ENCODE measurements at regions of chr20 and their contacts with region 1.

Region 1: DNA sequence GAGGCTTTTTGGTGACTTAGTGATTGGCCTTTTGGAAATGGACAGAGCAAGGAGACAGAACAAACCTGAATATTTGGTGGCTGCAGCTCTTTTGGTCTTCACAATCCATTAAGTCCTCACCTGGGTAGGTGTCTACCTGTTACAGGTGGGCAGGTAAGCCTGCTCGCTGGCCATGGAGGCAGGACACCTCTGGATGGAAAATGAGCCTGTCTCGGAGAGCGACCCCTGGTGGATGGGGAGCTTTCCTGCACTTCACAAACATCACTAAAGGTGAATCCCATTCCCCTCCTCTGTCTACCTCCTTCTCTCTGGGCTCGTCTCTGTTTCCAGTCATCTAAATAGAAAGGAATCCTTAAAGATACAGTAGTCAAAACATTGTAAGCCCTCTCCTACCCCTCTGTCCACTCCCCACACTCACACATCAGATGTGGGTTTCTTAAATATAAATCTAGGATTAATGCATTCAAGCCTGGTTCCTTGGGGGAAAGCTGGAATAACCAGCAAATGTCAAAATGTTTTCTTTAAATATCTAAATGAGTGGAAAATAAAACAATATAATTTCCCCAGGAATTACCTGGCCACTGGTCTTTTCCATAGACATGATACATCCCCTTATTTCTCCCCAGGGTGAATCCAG is 304.9 kb downstream of the CDH26 start:
- DNase-seq: peak; percentile 27
- H3K4me3 ChIP-seq: no peak overlapping the region
- H3K27ac ChIP-seq: no peak overlapping the region
- H3K4me1 ChIP-seq: no peaks in the 10 kb centered on the region
- H3K27me3 ChIP-seq: no peaks in the 10 kb centered on the region
- CTCF ChIP-seq: peak; percentile 58

Region 2: GRCh38 chr20:59866338-59866737 is 396.7 kb before region 1 on chr20:
- intact Hi-C with region 1: no loop called
- DNase-seq: no peak
- H3K4me3 ChIP-seq: no peak overlapping the region
- H3K27ac ChIP-seq: no peak overlapping the region
- H3K4me1 ChIP-seq: no peaks in the 10 kb centered on the region
- H3K27me3 ChIP-seq: no peaks in the 10 kb centered on the region
- CTCF ChIP-seq: no peak

Region 3: GRCh38 chr20:60057123-60057801 is 205.8 kb before region 1 on chr20:
- intact Hi-C with region 1: loop called (anchors 5 kb)
- DNase-seq: peak; percentile 52
- H3K4me3 ChIP-seq: no peak overlapping the region
- H3K27ac ChIP-seq: no peak overlapping the region
- H3K4me1 ChIP-seq: no peaks in the 10 kb centered on the region
- H3K27me3 ChIP-seq: no peaks in the 10 kb centered on the region
- CTCF ChIP-seq: peak; percentile 83

Region 4: DNA sequence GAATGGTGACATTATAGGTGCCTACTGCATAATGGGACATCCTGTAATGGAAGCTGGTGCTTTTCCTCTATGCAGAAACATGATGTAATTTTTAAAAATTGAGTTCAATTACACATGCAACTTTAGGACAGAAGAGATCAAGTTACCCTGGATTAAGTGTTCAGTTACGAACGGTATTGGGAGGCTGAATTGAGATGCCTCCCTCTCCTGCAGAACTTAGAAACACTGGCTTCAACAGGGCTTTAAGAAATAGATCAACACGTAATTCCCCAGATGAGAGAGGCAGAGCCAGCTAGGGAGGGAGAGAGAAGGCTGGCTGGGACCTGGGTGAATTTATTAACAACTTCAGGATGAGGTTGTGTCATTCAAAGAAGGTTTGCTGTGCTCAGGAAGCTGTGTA is 72.1 kb before region 1 on chr20:
- intact Hi-C with region 1: no loop called
- DNase-seq: no peak
- H3K4me3 ChIP-seq: no peak overlapping the region
- H3K27ac ChIP-seq: no peak overlapping the region
- H3K4me1 ChIP-seq: no peaks in the 10 kb centered on the region
- H3K27me3 ChIP-seq: no peaks in the 10 kb centered on the region
- CTCF ChIP-seq: no peak

Region 5: GRCh38 chr20:60331688-60332300 is 68.7 kb after region 1 on chr20:
- intact Hi-C with region 1: no loop called
- DNase-seq: no peak
- H3K4me3 ChIP-seq: no peak overlapping the region
- H3K27ac ChIP-seq: no peak overlapping the region
- H3K4me1 ChIP-seq: no peaks in the 10 kb centered on the region
- H3K27me3 ChIP-seq: no peaks in the 10 kb centered on the region
- CTCF ChIP-seq: no peak

Region 6: DNA sequence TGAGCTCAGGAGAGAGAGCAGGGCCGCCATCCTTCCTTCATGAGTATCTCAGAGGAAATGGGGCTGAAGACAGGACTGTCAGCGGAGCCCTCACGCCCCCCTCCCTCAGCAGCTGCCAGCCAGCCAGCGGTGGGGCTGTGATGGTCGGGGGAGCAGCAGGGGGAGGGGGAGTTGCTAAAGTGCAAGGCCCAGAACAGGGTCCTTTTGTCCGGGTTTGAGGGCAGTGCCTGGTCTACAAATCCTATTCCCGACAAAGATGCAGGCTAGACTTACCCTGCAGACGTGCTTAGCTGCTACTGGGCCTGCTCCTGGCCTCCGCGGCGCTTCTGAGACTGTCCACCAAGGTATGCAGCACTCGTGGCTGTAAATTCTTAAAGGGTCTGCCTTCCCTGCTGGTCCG is 395.6 kb after region 1 on chr20:
- intact Hi-C with region 1: no loop called
- DNase-seq: no peak
- H3K4me3 ChIP-seq: no peak overlapping the region
- H3K27ac ChIP-seq: no peak overlapping the region
- H3K4me1 ChIP-seq: no peaks in the 10 kb centered on the region
- H3K27me3 ChIP-seq: no peaks in the 10 kb centered on the region
- CTCF ChIP-seq: no peak